ENCODE measurements at regions of chr10 and their contacts with region 1.

Region 1: DNA sequence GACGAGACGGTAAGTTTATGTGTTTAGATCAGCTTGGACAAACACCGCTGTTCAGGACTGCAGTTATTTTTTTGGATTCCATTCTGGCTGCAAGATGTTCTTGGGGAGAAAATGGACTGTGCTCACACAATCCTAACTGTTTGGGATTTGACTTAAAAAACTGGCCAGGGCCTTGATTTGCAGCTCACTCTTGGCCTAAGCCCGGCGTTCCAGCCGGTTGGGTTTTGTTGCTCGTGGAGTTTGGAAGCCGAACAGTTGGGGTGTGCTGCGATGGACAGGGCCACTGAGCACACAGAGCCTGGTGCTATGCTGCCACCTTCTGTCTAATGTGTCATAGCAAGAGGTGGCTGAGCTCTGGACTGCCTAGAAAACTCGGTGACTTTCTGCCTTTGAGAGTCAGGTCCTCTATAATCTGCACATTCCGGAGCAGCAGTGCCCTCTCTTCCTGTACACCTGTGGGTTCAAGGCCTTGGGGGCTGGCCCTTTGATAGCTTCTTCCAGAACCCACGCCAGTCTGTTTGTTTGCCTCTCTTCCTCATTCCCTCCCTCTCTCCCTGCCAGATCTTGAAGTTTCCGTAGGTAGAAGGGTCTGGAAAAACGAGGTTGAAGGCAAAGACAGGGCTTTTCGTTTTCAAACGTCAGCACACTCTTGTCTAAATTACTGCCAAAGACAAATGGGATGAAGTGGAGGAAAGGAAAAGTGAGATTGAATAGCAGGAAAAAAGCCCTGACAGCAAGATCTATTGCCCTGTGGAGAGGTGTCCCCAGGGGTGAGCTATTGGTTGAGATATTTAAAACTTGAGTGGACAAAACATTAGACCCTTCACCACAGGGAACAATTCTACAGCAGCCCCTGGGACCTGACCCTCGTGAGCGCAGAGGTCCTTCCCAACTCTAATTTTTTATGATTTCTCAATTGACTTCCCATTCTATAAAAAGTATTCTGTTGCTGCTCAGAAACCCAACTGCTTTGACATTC is 167.5 kb upstream of the HABP2 start:
- DNase-seq: peak; percentile 89
- ATAC-seq: peak; percentile 97

Region 2: GRCh38 chr10:112471878-112472487 is 913.3 kb before region 1 on chr10:
- intact Hi-C with region 1: loop called (anchors 5 kb)
- DNase-seq: no peak
- ATAC-seq: no peak

Region 3: DNA sequence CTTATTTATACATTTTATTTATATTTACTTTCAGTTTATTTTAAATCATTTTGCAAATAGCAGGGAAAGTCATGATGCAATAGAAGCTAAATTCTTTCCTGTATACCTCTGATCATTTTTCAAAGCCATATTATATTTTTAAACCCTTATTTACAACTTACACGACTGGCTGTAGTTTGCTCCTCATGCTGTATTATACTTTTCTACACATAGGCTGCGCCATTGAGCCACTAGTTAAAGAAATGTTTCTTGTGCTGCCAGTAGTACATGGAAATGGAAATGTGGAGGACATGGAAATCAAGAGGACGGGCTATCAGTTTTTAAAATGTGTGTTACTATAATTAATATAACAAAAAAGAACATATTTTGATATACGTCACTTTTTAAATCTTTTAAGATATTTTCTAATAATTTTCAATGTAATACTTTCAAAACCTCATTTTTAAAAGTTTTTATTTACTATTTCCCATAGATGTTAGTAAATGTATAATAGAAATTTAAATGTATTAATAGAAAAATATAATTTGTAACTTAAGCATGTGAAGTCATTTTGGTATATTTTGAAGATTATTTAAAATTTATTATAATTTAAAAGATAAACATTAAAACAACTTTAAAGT is 819.8 kb before region 1 on chr10:
- intact Hi-C with region 1: loop called (anchors 5 kb)
- DNase-seq: no peak
- ATAC-seq: no peak

Region 4: GRCh38 chr10:112721080-112721698 is 664.1 kb before region 1 on chr10:
- intact Hi-C with region 1: loop called (anchors 5 kb)
- DNase-seq: no peak
- ATAC-seq: peak; percentile 28

Region 5: DNA sequence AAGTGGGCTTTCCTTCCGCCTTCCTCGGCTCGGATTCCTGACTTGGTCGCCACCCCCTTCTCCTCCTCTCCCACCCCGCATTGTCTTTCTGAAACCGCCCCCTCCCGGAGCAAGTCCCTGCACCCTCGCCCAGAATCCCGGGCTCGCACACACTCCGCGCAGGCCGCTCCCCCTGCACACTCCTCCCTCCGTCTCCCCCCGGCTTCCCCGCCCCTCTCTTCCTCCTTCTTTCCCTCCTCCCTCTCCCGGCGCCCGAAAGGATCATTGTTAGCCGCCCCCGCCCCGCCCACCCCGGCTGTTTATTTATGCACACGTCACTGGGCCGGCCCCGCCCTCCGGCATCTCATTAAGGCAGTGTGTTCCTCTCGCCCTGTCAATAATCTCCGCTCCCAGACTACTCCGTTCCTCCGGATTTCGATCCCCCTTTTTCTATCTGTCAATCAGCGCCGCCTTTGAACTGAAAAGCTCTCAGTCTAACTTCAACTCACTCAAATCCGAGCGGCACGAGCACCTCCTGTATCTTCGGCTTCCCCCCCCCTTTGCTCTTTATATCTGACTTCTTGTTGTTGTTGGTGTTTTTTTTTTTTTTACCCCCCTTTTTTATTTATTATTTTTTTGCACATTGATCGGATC is 435.3 kb before region 1 on chr10 and contains the start of gene TCF7L2:
- intact Hi-C with region 1: loop called (anchors 5 kb)
- DNase-seq: peak; percentile 99
- ATAC-seq: peak; percentile 95
- total RNA-seq, gene TCF7L2: 12.4 TPM

Region 6: DNA sequence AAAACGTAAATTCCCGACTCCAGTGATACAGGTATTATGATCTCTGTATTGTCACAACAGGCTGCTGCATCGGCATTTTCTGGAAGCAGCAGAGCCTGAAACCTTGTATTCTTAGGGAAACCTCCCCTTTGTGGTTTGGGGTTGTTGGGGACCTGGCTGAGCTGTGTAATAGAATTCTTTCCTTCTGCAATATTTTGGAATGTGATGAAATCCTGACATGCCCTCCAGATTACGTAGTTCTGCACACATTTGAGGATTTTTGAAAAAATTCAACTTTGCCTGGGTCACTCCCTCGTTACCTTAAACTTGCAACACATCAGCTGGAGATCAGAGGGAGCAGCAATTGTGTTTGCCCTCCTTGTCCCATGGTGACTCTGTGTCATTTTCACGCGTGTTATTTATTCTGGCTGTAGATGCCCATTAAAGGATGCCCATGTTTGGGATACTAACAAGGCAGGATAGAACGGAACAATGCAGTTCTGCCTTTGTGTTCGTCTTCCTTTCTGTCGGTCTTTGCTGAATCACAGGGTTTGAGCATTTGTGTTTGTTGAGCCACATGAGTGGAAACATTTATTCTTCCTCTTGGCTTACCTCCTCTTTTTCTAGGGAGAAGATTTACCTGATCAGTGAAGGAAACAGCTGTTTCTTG is 253.6 kb before region 1 on chr10:
- intact Hi-C with region 1: loop called (anchors 5 kb)
- DNase-seq: no peak
- ATAC-seq: peak; percentile 67